PC-9 (cell line): ENCODE measurements at regions of chr12 and their contacts with region 1.

Region 1: DNA sequence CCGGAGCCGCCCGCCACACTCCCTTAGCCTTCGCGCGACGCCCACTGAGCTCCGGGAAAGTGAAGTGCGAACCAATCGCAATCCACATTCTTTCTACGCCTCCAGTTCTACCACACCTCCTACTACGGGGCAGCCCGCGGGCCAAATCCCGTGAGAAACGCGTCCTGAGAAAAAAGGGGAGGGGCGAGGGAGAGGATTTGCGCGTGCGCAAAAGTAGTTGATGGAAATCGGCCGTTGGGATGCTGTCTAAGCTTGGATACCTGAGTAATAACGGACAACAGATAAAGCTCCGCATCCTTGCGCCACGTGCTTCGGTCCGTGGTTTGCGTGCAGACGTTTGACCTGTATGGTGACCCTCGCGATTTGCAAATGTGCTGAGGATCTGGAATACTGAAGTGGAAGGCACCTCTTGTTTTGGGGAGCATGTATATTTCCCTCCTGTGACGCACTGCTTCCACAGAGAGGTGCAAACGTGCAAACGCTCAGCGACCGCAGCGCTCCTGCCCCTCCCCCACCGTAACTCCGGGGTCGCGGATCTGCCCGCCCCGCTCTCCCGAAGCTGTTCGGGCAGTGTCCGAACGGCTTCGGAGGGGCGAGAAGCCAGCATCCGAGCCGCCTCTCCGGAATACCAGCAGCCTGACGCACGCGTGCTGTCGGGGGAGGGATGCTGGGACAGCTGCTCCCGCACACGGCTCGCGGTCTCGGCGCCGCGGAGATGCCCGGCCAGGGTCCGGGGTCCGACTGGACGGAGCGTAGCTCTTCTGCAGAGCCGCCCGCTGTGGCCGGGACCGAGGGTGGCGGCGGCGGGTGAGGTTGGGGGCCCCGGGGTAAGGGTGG is at the starts of genes FAM216A and GPN3:
- DNase-seq: peak; percentile 95 to 97
- H3K4me3 ChIP-seq: peak within 1 kb of the TSS; percentile 81
- H3K27ac ChIP-seq: peak within 1 kb of the TSS; percentile 70
- H3K4me1 ChIP-seq: peaks cover 18% of the 10 kb centered on the region
- H3K27me3 ChIP-seq: no peaks in the 10 kb centered on the region
- CTCF ChIP-seq: no peak
- total RNA-seq, gene FAM216A: 7.7 and 8.0 TPM in 2 replicates
- total RNA-seq, gene GPN3: 28.5 and 35.1 TPM in 2 replicates

Region 2: DNA sequence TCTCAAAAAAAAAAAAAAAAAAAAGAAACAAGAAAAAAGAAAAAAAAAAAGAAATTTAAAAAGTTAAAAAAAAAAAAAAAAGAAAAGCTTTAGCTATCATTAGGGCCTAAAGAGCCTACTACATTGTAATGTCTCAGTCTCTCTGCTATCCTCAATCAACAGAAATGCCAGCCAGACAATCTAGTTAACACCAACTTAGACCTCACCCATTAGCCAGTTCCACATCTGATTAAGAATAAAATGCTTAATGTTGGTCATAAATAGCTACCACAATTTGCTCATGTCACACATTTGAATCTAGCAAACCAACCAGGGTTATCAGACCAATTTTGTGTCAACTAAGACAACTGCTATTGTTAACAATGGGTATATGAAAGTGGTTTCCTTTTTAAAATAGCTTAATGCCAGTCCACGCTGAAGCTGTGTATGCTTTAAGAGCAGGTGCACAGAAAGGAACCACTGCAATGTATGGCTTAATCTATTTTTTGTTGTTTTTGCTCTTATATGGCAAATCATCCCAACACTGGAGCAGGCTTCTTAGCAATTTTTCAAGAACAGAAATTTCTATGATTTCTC is 1789.2 kb before region 1 on chr12:
- CTCF ChIA-PET with region 1: no interaction called
- POLR2A ChIA-PET with region 1: interaction called, 13 read pairs
- intact Hi-C with region 1: no loop called
- DNase-seq: no peak
- H3K4me3 ChIP-seq: no peak overlapping the region
- H3K27ac ChIP-seq: no peak overlapping the region
- H3K4me1 ChIP-seq: no peaks in the 10 kb centered on the region
- H3K27me3 ChIP-seq: no peaks in the 10 kb centered on the region
- CTCF ChIP-seq: no peak

Region 3: DNA sequence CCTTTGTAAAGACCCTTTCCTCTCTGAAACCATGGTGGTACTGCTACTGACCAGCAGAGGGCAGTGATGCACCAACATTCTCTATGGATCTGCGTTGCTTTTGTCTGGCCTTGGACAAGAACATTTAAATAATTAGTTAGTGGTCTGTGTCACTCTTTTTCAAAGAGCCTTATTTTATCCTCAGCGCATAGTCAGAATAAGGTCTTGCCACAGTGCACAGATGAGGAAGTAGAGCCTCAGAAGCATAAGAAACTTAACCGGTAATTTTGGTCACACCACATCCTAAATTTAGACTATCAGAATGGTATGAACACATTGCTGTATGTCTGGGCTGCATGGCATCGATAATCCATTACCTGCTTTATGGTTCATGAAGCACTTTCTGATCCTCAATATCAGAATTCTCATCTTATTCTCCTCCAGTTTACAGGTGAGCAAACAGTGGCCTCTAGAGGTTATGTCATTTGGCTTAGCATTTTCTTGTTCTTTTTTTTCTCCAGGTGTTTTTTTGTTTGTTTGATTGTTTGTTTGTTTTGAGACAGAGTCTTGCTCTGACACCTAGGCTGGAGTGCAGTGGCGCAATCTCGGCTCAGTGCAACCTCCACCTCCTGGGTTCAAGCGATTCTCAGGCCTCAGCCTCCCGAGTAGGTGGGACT is 368.0 kb before region 1 on chr12:
- CTCF ChIA-PET with region 1: interaction called, 10 read pairs
- POLR2A ChIA-PET with region 1: no interaction called
- intact Hi-C with region 1: no loop called
- DNase-seq: peak; percentile 53 to 60
- H3K4me3 ChIP-seq: no peak overlapping the region
- H3K27ac ChIP-seq: no peak overlapping the region
- H3K4me1 ChIP-seq: no peaks in the 10 kb centered on the region
- H3K27me3 ChIP-seq: no peaks in the 10 kb centered on the region
- CTCF ChIP-seq: peak; percentile 97

Region 4: GRCh38 chr12:110449799-110450497 is 18.5 kb before region 1 on chr12 and contains the start of gene ARPC3:
- CTCF ChIA-PET with region 1: interaction called, 5 read pairs
- POLR2A ChIA-PET with region 1: interaction called, 8 read pairs
- intact Hi-C with region 1: loop called (anchors 1 kb)
- DNase-seq: peak; percentile 90 to 93
- H3K4me3 ChIP-seq: peak within 1 kb of the TSS; percentile 94
- H3K27ac ChIP-seq: peak within 1 kb of the TSS; percentile 61
- H3K4me1 ChIP-seq: 0 out of 2 replicates have a peak, but pooled peaks cover 4% of the 10 kb centered on the region
- H3K27me3 ChIP-seq: no peaks in the 10 kb centered on the region
- CTCF ChIP-seq: peak; percentile 77
- total RNA-seq, gene ARPC3: 167 and 229 TPM in 2 replicates

Region 5: GRCh38 chr12:110501752-110502738 is 33.6 kb after region 1 on chr12 and contains the starts of genes RAD9B and VPS29:
- CTCF ChIA-PET with region 1: no interaction called
- POLR2A ChIA-PET with region 1: interaction called, 7 read pairs
- intact Hi-C with region 1: loop called (anchors 2 kb)
- DNase-seq: peak; percentile 95 to 96
- H3K4me3 ChIP-seq: peak within 1 kb of the TSS; percentile 79
- H3K27ac ChIP-seq: peak within 1 kb of the TSS; percentile 85
- H3K4me1 ChIP-seq: peaks cover 22% of the 10 kb centered on the region
- H3K27me3 ChIP-seq: no peaks in the 10 kb centered on the region
- CTCF ChIP-seq: no peak
- total RNA-seq, gene RAD9B: 1.6 and 2.3 TPM in 2 replicates
- total RNA-seq, gene VPS29: 78.3 and 114 TPM in 2 replicates

Region 6: DNA sequence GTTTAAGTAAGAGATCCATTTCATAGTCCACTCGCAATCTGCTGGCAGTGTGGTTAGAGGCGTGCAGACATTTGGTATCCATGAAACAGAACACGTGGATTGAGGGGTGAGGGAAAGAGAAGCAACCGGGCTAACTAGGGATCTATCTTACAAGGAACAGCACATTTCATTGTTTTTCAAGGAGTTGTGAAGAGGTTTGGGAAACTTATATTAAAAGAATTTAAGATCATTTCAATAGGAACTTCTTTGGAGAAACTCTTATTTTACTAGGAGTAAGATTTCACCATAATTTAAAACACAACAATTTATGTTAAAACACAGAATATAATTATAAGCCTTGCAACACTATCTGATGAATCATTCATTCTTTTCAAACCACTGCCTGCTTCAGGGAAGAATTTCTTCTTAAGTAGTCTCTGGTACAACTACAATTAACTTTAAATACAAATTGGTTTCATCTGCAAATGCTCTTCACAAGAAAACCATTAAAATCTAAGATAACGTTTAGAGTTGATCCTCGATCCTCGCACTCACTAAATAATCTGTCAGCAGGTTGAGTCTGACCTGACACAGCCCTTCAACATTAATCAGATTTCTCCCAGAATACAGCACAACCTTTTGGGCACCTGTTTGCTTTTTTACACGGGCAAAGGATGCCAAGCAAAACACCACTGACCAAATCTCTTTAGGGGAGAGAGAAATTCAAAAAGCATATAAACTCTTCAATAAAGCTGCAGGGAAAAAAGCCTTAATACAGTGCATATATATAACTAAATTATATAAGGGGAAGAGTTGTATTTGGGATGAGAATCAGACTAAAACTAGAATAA is 87.4 kb after region 1 on chr12:
- CTCF ChIA-PET with region 1: no interaction called
- POLR2A ChIA-PET with region 1: no interaction called
- intact Hi-C with region 1: loop called (anchors 2 kb)
- DNase-seq: peak in 1 of 2 experiments; percentile 43
- H3K4me3 ChIP-seq: no peak overlapping the region
- H3K27ac ChIP-seq: peak overlapping the region; percentile 58
- H3K4me1 ChIP-seq: peaks cover 24% of the 10 kb centered on the region
- H3K27me3 ChIP-seq: no peaks in the 10 kb centered on the region
- CTCF ChIP-seq: no peak

Region 7: GRCh38 chr12:110627500-110628195 is 159.2 kb after region 1 on chr12:
- CTCF ChIA-PET with region 1: no interaction called
- POLR2A ChIA-PET with region 1: no interaction called
- intact Hi-C with region 1: no loop called
- DNase-seq: no peak
- H3K4me3 ChIP-seq: no peak overlapping the region
- H3K27ac ChIP-seq: no peak overlapping the region
- H3K4me1 ChIP-seq: no peaks in the 10 kb centered on the region
- H3K27me3 ChIP-seq: no peaks in the 10 kb centered on the region
- CTCF ChIP-seq: no peak

Region 8: DNA sequence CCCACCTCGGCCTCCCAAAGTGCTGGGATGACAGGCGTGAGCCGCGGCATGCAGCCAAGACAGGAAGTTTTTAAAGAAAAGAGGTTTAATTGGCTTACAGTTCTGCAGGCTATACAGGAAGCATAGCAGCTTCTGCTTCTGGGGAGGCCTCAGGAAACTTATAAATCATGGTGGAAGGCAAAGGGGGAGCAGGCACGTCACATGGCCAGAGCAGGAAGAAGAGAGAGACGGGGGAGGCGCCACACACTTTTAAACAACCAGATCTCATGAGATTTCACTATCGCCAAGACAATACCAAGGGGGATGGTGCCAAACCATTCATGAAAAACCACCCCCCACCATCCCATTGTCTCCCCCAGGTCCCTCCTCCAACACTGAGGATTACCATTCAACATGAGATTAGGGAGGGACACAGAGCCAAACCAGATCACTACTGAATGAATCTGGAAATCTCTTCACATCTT is 392.4 kb after region 1 on chr12:
- CTCF ChIA-PET with region 1: no interaction called
- POLR2A ChIA-PET with region 1: interaction called, 15 read pairs
- intact Hi-C with region 1: no loop called
- DNase-seq: no peak
- H3K4me3 ChIP-seq: no peak overlapping the region
- H3K27ac ChIP-seq: no peak overlapping the region
- H3K4me1 ChIP-seq: no peaks in the 10 kb centered on the region
- H3K27me3 ChIP-seq: 0 out of 2 replicates have a peak, but pooled peaks cover 14% of the 10 kb centered on the region
- CTCF ChIP-seq: no peak